Endothelial cell of umbilical vein (primary cell): ENCODE measurements at regions of chr9 and their contacts with region 1.

Region 1: GRCh38 chr9:4984621-4985385 is at the start of gene JAK2:
- DNase-seq: peak; percentile 96
- H3K4me3 ChIP-seq: peak within 1 kb of the TSS; percentile 63 to 86 (median 79)
- H3K27ac ChIP-seq: peak within 1 kb of the TSS; percentile 90
- H3K4me1 ChIP-seq: peaks cover 36% of the 10 kb centered on the region
- H3K27me3 ChIP-seq: no peaks in the 10 kb centered on the region
- CTCF ChIP-seq: peak; percentile 23 to 61
- POLR2A ChIP-seq: peak; percentile 76
- total RNA-seq, gene JAK2: 9.7 and 10.3 TPM in 2 replicates

Region 2: DNA sequence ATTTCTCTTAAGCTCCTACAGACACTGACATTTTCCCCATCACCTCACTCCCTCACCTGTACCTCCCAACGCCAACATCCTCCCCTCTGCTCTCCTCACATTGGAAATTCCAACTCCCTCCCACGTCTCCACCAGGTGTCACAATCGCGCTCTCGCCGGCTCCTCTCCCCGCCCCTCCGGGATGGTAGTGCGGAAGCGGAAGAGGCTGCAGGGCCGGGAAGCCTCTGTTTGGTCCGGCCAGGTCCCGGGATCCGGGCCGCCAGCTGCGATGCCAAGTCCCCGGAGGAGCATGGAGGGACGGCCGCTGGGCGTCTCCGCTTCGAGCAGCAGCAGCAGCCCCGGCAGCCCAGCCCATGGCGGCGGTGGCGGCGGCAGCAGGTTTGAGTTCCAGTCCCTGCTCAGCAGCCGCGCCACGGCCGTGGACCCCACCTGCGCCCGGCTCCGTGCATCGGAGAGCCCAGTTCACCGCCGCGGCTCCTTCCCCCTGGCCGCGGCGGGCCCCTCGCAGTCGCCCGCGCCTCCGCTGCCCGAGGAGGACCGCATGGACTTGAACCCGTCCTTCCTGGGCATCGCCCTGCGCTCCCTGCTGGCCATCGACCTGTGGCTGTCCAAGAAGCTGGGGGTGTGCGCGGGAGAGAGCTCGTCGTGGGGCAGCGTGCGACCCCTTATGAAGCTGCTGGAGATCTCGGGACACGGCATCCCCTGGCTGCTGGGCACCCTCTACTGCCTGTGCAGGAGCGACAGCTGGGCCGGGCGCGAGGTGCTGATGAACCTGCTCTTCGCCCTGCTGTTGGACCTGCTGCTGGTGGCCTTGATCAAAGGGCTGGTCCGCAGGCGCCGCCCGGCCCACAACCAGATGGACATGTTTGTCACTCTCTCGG is 322.5 kb before region 1 on chr9 and contains the start of gene PLPP6:
- CTCF ChIA-PET with region 1: no interaction called
- POLR2A ChIA-PET with region 1: no interaction called
- dilution Hi-C with region 1: no loop called
- intact Hi-C with region 1: loop called (anchors 2 kb)
- DNase-seq: peak; percentile 76
- H3K4me3 ChIP-seq: peak within 1 kb of the TSS; percentile 57 to 81 (median 71)
- H3K27ac ChIP-seq: peak within 1 kb of the TSS; percentile 10
- H3K4me1 ChIP-seq: peaks cover 32% of the 10 kb centered on the region
- H3K27me3 ChIP-seq: no peaks in the 10 kb centered on the region
- CTCF ChIP-seq: peak; percentile 18 to 57
- POLR2A ChIP-seq: peak; percentile 74
- total RNA-seq, gene PLPP6: 5.4 and 6.4 TPM in 2 replicates

Region 3: DNA sequence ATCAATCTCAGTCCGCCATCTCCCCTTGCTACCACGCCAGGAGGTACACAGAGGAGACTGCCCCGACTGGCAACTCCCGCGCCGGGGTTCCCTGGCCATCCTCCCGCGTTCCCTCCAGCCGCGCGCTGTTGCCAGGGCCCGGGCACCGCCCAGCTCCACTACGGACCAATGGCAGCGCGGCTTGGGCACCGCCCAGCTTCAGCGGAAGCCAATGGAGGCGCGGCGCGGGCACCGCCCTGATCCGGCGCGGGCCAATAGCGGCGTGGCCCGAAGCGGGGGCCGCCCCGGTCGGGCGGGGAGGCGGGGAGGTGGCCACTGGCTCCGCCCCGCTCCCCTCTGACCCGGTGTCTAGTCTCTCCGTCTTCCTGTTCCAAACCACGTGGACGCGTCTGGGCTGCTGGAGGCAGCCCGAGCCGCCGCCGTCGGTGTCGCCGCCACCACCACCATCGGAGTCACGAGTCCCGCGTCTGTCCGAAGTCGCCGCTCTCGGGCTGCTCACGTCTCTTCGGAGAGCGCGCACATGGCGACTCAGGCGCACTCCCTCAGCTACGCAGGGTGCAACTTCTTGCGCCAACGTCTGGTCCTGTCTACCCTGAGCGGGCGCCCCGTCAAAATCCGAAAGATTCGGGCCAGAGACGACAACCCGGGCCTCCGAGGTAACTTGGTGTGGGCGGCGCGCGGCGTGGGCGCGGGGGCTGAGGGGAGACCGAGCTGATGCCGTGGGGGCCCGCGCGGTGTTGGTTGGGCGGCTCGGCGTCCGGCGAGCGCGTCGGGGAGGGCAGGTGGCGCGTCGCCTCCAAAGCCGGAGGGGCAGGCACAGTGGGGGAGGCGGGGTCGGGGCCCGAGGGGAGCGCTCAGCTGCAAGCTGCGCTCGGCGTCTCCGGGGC is 192.0 kb before region 1 on chr9 and contains the start of gene RCL1:
- CTCF ChIA-PET with region 1: interaction called, 7 read pairs
- POLR2A ChIA-PET with region 1: interaction called, 4 read pairs
- dilution Hi-C with region 1: no loop called
- intact Hi-C with region 1: loop called (anchors 1 kb)
- DNase-seq: peak; percentile 98
- H3K4me3 ChIP-seq: peak within 1 kb of the TSS; percentile 92 to 94 (median 94)
- H3K27ac ChIP-seq: peak within 1 kb of the TSS; percentile 75
- H3K4me1 ChIP-seq: peaks cover 19% of the 10 kb centered on the region
- H3K27me3 ChIP-seq: peaks cover 0 to 3% of the 10 kb centered on the region in 2 experiments
- CTCF ChIP-seq: no peak
- POLR2A ChIP-seq: peak; percentile 60
- total RNA-seq, gene RCL1: 12.1 and 13.2 TPM in 2 replicates

Region 4: DNA sequence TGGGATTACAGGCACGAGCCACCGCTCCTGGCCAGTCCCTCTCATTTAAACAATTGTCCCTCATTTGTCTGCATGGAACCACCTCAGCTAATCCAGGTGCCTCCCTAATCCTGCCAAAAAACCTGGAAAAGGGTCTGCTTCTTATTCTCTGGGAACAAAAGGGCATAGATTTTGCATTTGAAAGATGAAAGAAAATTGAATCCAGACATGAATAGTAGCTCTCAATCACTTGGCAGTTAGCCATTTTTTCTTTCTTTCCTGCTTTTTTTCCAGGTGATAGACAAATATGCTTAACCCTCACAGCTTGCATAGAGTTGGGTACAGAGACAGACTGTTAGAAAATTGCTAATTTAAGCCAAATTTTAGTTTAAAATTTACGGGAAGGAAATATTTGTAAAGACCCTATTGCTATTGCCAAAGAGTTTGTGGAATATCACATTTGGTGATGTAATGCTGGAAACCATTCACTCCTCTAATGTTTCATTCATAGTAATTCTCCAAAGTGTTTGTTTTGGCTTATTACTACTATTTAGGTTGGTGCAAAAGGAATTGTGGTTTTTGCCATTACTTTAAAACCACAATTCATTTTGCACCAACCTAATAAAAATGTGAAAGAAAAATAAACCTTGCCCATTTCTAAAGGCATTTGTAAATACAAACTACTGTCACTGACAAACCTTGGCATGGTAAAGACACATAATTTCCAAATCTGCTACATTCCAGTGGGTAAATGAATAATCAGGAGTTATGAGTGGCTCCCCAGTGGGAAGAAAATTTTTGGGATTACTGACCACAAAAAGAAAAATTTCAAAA is 80.3 kb before region 1 on chr9:
- CTCF ChIA-PET with region 1: interaction called, 3 read pairs
- POLR2A ChIA-PET with region 1: no interaction called
- dilution Hi-C with region 1: no loop called
- intact Hi-C with region 1: loop called (anchors 1 kb)
- DNase-seq: peak; percentile 30
- H3K4me3 ChIP-seq: no peak overlapping the region
- H3K27ac ChIP-seq: no peak overlapping the region
- H3K4me1 ChIP-seq: peaks cover 4% of the 10 kb centered on the region
- H3K27me3 ChIP-seq: no peaks in the 10 kb centered on the region
- CTCF ChIP-seq: no peak
- POLR2A ChIP-seq: no peak

Region 5: DNA sequence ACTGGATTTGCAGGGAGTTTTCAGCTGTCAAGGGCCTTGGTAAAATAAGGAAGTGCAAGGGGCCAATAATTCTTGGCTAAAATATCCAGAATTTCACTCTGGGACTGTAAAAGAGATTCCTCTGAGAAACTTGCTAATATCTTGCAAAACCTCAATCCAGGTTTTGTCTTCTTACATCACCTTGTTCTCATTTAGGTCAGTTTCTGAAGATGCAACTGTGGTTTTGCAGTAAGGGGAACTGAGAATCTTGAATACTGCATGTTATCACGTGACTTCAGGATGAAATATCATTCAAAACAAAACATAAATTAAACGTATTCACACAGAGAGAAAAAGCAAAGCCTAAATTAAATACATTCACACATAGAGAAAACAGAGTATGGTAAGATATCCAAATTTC is 609.1 kb after region 1 on chr9:
- CTCF ChIA-PET with region 1: interaction called, 3 read pairs
- POLR2A ChIA-PET with region 1: no interaction called
- dilution Hi-C with region 1: no loop called
- intact Hi-C with region 1: loop called (anchors 5 kb)
- DNase-seq: no peak
- H3K4me3 ChIP-seq: no peak overlapping the region
- H3K27ac ChIP-seq: no peak overlapping the region
- H3K4me1 ChIP-seq: peaks cover 6% of the 10 kb centered on the region
- H3K27me3 ChIP-seq: no peaks in the 10 kb centered on the region
- CTCF ChIP-seq: no peak
- POLR2A ChIP-seq: no peak